ENCODE measurements at regions of chr7 and their contacts with region 1.

Region 1: DNA sequence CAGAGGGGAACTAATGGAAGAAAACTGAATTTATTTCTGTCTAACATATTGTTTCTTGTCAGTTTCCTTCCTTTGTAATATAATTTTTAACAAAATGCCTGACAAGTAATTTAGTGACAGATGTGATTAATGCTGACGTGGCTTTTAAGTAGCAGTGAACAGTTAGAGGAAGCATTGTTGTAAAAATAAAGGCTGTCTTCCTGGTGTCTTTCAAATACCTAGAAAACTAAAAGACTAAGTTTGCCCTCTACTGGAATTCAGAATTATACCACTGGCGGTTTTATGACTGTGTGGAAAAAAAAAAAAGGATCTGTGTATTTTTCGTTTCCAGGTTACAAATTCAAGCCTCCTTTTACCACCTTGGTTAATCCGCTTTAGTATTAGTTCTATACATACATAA is 217.1 kb upstream of the DPP6 start:
- DNase-seq: no peak
- ATAC-seq: no peak
- H3K4me3 ChIP-seq: no peak overlapping the region
- H3K27ac ChIP-seq: no peak overlapping the region
- H3K4me1 ChIP-seq: no peaks in the 10 kb centered on the region
- H3K27me3 ChIP-seq: no peaks in the 10 kb centered on the region
- CTCF ChIP-seq: peak in 1 of 9 donors; percentile 31

Region 2: DNA sequence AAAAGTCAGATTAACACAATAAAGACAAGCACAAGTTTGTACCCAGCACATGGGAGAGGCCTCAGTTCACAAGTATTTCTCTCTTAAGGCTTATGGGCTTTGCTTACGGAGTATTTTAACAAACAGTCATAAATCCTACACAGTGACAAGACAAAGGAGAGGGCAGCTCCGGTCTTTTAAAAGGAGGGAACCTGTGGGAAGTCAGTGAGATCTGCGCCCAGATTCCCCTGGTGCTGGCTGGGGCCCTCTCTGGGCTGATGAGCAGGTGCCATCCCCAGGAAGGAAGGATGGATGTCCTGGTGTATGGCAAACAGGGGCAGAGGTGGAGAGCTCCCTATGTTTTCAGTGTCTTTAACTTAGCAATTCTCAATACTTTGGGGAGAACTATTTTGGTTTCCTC is 676.9 kb before region 1 on chr7:
- intact Hi-C with region 1: no loop called
- DNase-seq: no peak
- ATAC-seq: no peak
- H3K4me3 ChIP-seq: no peak overlapping the region
- H3K27ac ChIP-seq: no peak overlapping the region
- H3K4me1 ChIP-seq: no peaks in the 10 kb centered on the region
- H3K27me3 ChIP-seq: peaks cover 0 to 5% (median 0%) of the 10 kb centered on the region in 7 donors
- CTCF ChIP-seq: no peak

Region 3: GRCh38 chr7:153381275-153382040 is 453.6 kb before region 1 on chr7:
- intact Hi-C with region 1: loop called in 1 of 10 experiments (anchors 2 kb)
- DNase-seq: peak in 1 of 2 donors; percentile 23
- ATAC-seq: peak in 5 of 8 donors; percentile 40 to 83 (median 69)
- H3K4me3 ChIP-seq: peak overlapping the region in 1 of 10 donors; percentile 33
- H3K27ac ChIP-seq: no peak overlapping the region
- H3K4me1 ChIP-seq: peaks cover 0 to 4% (median 0%) of the 10 kb centered on the region in 9 donors
- H3K27me3 ChIP-seq: peaks cover 0 to 10% (median 0%) of the 10 kb centered on the region in 7 donors
- CTCF ChIP-seq: peak; percentile 41 to 77 (median 70)

Region 4: GRCh38 chr7:154242709-154243108 is 407.6 kb after region 1 on chr7:
- intact Hi-C with region 1: no loop called
- DNase-seq: no peak
- ATAC-seq: no peak
- H3K4me3 ChIP-seq: no peak overlapping the region
- H3K27ac ChIP-seq: no peak overlapping the region
- H3K4me1 ChIP-seq: no peaks in the 10 kb centered on the region
- H3K27me3 ChIP-seq: no peaks in the 10 kb centered on the region
- CTCF ChIP-seq: no peak